ENCODE measurements at regions of chr10 and their contacts with region 1.

Region 1: GRCh38 chr10:43461950-43462349 is 25.0 kb downstream of the ZNF487 start:
- DNase-seq: peak in 4 of 9 experiments; percentile 13 to 88 (median 66)
- ATAC-seq: peak; percentile 94
- H3K4me3 ChIP-seq: no peak overlapping the region
- H3K4me3 Mint-ChIP-seq: no peak overlapping the region
- H3K27ac ChIP-seq: no peak overlapping the region
- H3K27ac Mint-ChIP-seq: no peak overlapping the region
- H3K4me1 ChIP-seq: peaks cover 2% of the 10 kb centered on the region
- H3K4me1 Mint-ChIP-seq: peaks cover 11% of the 10 kb centered on the region
- H3K27me3 ChIP-seq: no peaks in the 10 kb centered on the region
- H3K27me3 Mint-ChIP-seq: no peaks in the 10 kb centered on the region
- CTCF ChIP-seq: peak; percentile 68

Region 2: DNA sequence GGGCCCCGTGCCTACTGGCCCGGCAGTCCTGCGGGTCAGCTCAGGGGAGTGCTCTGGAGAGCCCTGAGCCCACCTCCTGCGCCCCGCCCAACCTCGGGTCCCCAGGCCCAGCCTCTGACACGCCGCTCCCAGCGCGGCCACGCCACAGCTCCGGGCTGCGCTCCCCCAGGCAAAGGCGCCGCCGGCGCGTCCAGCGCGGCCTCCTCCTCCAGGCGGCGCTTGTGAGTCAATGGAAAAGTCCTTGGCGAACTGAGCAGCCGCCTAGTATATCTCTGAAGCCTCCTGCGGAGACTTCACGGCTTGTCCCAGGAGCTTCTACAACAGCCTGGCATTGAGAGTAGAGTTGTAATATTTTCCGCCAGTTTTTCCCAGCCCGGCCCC is 708.8 kb before region 1 on chr10:
- CTCF ChIA-PET with region 1: interaction called, 4 read pairs
- POLR2A ChIA-PET with region 1: no interaction called
- intact Hi-C with region 1: loop called in 1 of 2 experiments (anchors 5 kb)
- DNase-seq: peak; percentile 28 to 79 (median 62)
- ATAC-seq: peak; percentile 63
- H3K4me3 ChIP-seq: peak overlapping the region; percentile 47 to 71
- H3K4me3 Mint-ChIP-seq: peak overlapping the region; percentile 82
- H3K27ac ChIP-seq: no peak overlapping the region
- H3K27ac Mint-ChIP-seq: no peak overlapping the region
- H3K4me1 ChIP-seq: peaks cover 14% of the 10 kb centered on the region
- H3K4me1 Mint-ChIP-seq: peaks cover 6% of the 10 kb centered on the region
- H3K27me3 ChIP-seq: peaks cover 32 to 35% of the 10 kb centered on the region in 2 experiments
- H3K27me3 Mint-ChIP-seq: peaks cover 55% of the 10 kb centered on the region
- CTCF ChIP-seq: peak; percentile 62

Region 3: DNA sequence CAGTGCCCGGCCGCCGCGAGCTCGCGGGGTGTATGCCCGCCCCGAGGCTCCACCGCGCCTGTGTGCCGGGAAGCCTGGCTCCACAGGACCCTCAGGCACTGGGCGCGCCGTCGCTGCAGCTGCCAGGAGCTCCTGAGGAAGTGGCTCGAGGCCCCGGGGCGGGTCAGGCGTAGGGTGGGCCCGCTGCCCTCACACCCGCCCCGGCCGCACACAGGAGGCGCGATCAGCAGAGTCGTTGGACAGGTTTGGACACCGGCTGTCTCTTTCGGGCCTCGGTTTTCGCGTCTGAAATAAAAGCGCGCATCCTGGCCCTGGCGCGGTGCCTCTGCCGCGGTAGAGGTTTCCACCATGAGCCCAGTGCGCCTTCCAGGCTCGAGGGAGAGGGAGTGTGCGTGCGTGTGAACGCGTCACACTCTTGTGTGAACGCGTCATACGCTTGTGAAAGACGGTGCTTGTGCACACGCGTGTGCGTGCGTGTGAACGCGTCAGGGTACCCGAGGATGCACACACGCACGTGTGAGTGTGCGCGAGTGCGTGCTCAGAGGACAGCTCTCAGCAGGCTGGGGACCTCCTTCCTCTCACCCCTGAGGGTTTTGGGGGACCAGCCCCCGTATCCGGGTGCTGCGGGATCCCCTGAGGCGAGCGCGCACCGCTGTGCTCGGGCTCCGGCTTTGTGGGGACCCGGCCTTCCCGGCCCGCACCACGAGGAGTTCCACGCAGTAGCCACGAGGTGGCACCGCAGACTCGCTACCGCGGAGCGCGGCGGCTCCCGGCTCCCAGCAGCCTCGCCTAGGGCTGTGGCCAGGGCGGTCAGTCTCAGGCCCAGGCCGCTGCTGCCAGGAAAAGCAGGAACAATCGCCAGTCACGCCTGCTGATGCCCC is 595.6 kb before region 1 on chr10:
- CTCF ChIA-PET with region 1: no interaction called
- POLR2A ChIA-PET with region 1: no interaction called
- intact Hi-C with region 1: loop called in 1 of 2 experiments (anchors 10 kb)
- DNase-seq: peak in 8 of 9 experiments; percentile 15 to 67 (median 44)
- ATAC-seq: peak; percentile 40
- H3K4me3 ChIP-seq: peak overlapping the region in 1 of 2 experiments; percentile 15
- H3K4me3 Mint-ChIP-seq: no peak overlapping the region
- H3K27ac ChIP-seq: no peak overlapping the region
- H3K27ac Mint-ChIP-seq: no peak overlapping the region
- H3K4me1 ChIP-seq: no peaks in the 10 kb centered on the region
- H3K4me1 Mint-ChIP-seq: peaks cover 6% of the 10 kb centered on the region
- H3K27me3 ChIP-seq: peaks cover 0 to 2% of the 10 kb centered on the region in 2 experiments
- H3K27me3 Mint-ChIP-seq: peaks cover 32% of the 10 kb centered on the region
- CTCF ChIP-seq: peak; percentile 29

Region 4: GRCh38 chr10:43204943-43205671 is 256.8 kb before region 1 on chr10:
- CTCF ChIA-PET with region 1: interaction called, 5 read pairs
- POLR2A ChIA-PET with region 1: no interaction called
- intact Hi-C with region 1: loop called (anchors 5 kb)
- DNase-seq: peak in 8 of 9 experiments; percentile 33 to 77 (median 58)
- ATAC-seq: peak; percentile 55
- H3K4me3 ChIP-seq: no peak overlapping the region
- H3K4me3 Mint-ChIP-seq: no peak overlapping the region
- H3K27ac ChIP-seq: peak overlapping the region in 1 of 2 experiments; percentile 30
- H3K27ac Mint-ChIP-seq: no peak overlapping the region
- H3K4me1 ChIP-seq: peaks cover 3% of the 10 kb centered on the region
- H3K4me1 Mint-ChIP-seq: peaks cover 6% of the 10 kb centered on the region
- H3K27me3 ChIP-seq: no peaks in the 10 kb centered on the region
- H3K27me3 Mint-ChIP-seq: no peaks in the 10 kb centered on the region
- CTCF ChIP-seq: peak; percentile 70

Region 5: GRCh38 chr10:43265799-43266721 is 195.9 kb before region 1 on chr10:
- CTCF ChIA-PET with region 1: no interaction called
- POLR2A ChIA-PET with region 1: no interaction called
- intact Hi-C with region 1: loop called (anchors 1 to 2 kb)
- DNase-seq: peak in 8 of 9 experiments; percentile 27 to 71 (median 49)
- ATAC-seq: peak; percentile 78
- H3K4me3 ChIP-seq: peak overlapping the region; percentile 41
- H3K4me3 Mint-ChIP-seq: peak overlapping the region; percentile 81
- H3K27ac ChIP-seq: no peak overlapping the region
- H3K27ac Mint-ChIP-seq: no peak overlapping the region
- H3K4me1 ChIP-seq: peaks cover 6% of the 10 kb centered on the region
- H3K4me1 Mint-ChIP-seq: peaks cover 6% of the 10 kb centered on the region
- H3K27me3 ChIP-seq: peaks cover 14 to 25% of the 10 kb centered on the region in 2 experiments
- H3K27me3 Mint-ChIP-seq: peaks cover 50% of the 10 kb centered on the region
- CTCF ChIP-seq: no peak

Region 6: DNA sequence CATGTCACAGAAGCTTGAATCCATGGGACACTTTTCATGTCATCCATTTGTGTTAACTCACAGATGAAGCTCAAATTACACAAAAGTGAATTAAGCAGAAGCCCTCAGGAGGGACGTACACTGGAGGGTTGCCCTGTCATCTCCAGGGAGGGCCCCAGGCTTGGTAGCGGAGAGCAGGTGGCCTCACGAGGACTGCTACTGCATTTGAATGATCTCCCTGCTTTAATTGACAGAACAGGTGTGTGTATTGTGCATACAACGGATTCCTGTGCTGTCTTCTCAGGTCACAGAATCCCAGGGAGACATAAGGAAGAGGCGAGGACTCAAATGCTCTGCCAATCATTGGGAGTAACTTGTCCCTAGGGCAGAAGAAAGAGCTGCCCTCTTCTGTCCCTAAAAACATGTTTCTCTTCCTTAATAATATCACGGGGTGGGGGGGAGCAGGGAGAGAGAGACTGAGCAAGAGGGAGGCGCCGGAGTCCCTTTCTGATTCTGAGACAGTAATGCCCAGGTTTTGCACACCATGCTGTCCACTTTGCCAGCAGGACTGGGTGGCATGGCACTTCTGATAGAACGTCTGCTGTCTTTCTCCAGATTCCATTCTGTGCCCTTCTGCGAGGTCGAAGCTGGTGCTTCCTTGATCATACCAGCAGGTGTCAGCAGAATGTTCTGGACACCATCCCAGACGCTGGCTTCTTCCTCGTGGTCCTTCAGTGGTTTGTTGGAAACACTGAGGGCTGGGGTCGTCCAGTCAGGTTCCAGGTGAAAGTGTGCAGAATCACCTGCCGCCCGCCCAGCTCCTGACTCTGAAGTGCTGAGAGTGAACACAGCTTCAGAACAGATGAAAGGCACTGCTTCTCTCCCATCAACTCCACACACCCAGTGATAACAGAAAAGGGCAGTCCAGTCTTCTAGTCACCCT is 168.9 kb before region 1 on chr10:
- CTCF ChIA-PET with region 1: interaction called, 18 read pairs
- POLR2A ChIA-PET with region 1: no interaction called
- intact Hi-C with region 1: loop called (anchors 1 to 2 kb)
- DNase-seq: peak in 7 of 9 experiments; percentile 35 to 72 (median 58)
- ATAC-seq: peak; percentile 53
- H3K4me3 ChIP-seq: no peak overlapping the region
- H3K4me3 Mint-ChIP-seq: peak overlapping the region; percentile 49
- H3K27ac ChIP-seq: no peak overlapping the region
- H3K27ac Mint-ChIP-seq: peak overlapping the region; percentile 71
- H3K4me1 ChIP-seq: peaks cover 32% of the 10 kb centered on the region
- H3K4me1 Mint-ChIP-seq: peaks cover 52% of the 10 kb centered on the region
- H3K27me3 ChIP-seq: peaks cover 0 to 3% of the 10 kb centered on the region in 2 experiments
- H3K27me3 Mint-ChIP-seq: no peaks in the 10 kb centered on the region
- CTCF ChIP-seq: peak; percentile 63

Region 7: GRCh38 chr10:43390759-43391158 is 71.2 kb before region 1 on chr10:
- CTCF ChIA-PET with region 1: interaction called, 10 read pairs
- POLR2A ChIA-PET with region 1: interaction called, 6 read pairs
- intact Hi-C with region 1: loop called in 1 of 2 experiments (anchors 1 kb)
- DNase-seq: peak in 4 of 9 experiments; percentile 29 to 72 (median 58)
- ATAC-seq: peak; percentile 73
- H3K4me3 ChIP-seq: no peak overlapping the region
- H3K4me3 Mint-ChIP-seq: no peak overlapping the region
- H3K27ac ChIP-seq: no peak overlapping the region
- H3K27ac Mint-ChIP-seq: peak overlapping the region; percentile 84
- H3K4me1 ChIP-seq: peaks cover 34% of the 10 kb centered on the region
- H3K4me1 Mint-ChIP-seq: peaks cover 77% of the 10 kb centered on the region
- H3K27me3 ChIP-seq: no peaks in the 10 kb centered on the region
- H3K27me3 Mint-ChIP-seq: no peaks in the 10 kb centered on the region
- CTCF ChIP-seq: peak; percentile 55

Measured in CD8-positive, alpha-beta T cell (primary cell).